ENCODE measurements at regions of chr1 and their contacts with region 1.

Region 1: DNA sequence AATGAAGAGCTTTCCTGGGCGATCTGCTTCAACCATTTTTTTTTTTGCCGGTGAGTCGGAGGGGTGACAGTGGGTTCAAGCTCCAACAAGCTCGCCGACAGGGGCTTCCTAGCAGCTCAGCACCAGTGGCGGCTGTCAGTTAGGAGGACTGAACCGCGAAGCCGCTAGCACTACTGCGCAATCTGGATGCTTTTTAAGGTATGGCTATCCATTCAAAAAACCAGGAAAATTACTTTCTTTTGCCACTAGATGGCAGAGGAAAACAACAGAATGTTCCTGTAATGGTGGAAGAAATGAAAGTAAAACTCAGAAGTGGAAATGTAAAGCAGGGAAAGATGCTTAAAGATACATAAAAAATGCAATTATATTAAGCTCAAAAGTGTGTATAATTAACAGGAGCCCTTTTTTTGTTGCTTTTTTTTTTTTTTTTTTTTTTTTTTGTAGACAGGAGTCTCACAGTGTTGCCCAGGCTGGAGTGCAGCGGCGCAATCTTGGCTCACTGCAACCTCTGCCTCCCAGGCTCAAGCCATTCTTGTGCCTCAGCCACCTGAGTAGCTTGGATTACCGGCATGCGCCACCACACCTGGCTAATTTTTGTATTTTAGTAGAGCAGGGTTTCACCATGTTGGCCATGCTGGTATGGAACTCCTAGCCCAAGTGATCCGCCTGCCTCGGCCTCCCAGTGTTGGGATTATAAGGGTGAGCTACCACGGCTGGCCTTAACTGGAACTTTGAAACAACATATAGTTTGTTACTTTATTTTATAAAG is 8.5 kb downstream of the KYAT3 start:
- DNase-seq: no peak
- H3K4me3 ChIP-seq: no peak overlapping the region
- CTCF ChIP-seq: peak; percentile 36

Region 2: GRCh38 chr1:88897070-88897730 is 86.8 kb before region 1 on chr1:
- CTCF ChIA-PET with region 1: no interaction called
- POLR2A ChIA-PET with region 1: no interaction called
- DNase-seq: no peak
- H3K4me3 ChIP-seq: no peak overlapping the region
- CTCF ChIP-seq: no peak

Region 3: DNA sequence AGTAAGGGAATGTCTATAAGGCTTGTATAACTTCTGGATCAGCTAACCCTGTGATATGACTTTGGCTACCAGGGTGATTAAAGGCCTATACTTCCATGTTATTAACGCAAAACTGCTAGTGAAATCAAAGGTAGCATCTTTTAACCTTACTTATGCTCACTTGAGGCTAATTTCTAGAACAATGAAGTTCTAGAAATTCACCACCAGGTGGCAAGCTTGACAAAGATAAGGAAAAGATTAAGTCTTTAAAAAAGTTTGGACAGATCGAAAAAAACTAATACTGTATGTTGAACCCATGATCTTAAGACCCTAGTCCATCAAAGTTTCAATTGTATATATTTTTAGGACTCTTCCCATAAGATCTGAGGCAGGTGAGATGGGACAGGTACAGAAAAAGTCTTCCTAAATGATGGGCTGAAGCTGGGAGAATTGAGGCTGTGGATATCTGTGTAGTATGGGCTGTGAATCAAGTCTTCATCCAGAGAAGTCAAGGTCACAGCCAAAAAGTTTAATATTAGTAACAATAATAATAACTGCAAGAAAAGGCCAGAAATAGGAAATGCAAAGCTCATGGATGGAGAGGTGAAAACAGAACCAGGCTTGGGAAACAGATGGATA is 10.3 kb before region 1 on chr1:
- CTCF ChIA-PET with region 1: interaction called, 96 read pairs
- POLR2A ChIA-PET with region 1: no interaction called
- DNase-seq: no peak
- H3K4me3 ChIP-seq: no peak overlapping the region
- CTCF ChIP-seq: no peak

Region 4: DNA sequence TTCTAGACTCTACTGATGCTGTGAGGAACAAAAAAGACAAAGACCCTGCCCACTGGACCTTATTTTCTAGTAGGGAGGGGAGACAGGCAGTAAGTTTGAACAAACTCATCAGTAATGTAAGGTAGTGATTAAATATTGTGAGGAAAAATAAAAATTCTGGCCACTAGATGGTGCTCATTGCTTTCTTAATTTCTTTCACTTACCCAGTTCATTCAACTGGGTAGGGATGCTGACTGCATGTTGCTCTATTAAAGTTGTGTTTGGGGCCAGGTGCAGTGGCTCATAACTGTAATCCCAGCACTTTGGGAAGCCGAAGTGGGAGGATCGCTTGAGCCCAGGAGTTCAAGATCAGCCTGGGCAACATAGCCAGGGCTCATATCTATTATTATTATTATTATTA is 14.7 kb after region 1 on chr1:
- CTCF ChIA-PET with region 1: interaction called, 15 read pairs
- POLR2A ChIA-PET with region 1: no interaction called
- DNase-seq: no peak
- H3K4me3 ChIP-seq: no peak overlapping the region
- CTCF ChIP-seq: peak; percentile 12

Region 5: DNA sequence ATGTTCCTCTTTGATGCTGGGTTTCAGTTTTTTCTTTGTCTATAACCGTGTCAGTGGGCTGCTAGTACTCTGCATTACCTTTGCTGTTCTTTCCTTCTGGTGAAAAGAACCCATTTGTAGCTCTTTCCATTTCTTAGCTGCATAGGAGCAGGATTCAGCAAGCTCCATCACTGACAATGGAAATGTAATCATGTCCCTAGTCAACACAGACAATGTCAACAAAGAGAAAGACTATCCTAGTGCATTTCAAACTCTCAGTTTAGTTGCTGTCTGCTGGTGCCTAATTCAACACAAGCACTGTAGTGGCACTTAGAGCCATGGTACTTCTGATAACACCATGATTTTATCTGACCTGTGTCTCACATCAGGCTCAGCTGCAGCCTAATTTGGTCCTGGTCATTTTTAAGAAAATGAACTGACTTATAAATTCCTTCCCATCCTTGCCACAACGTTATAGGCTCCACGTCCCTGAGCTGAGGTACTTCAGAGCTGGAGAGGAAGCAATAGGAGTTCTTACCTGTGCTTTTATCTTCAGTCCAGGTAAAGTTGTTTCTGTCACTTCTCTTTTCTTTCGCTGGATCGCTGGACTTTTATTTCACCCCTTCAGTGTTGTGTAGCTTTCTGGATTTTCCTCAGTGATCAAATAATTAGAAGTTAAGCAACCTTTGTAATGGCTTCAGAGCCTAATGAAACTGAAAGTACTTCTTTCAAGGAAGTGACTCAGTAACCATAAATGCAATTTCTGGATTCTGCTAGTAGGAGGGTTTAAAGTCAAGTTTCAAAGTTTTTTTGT is 38.4 kb after region 1 on chr1 and contains the start of gene GBP3:
- CTCF ChIA-PET with region 1: interaction called, 17 read pairs
- POLR2A ChIA-PET with region 1: no interaction called
- DNase-seq: peak; percentile 42
- H3K4me3 ChIP-seq: peak within 1 kb of the TSS; percentile 73
- CTCF ChIP-seq: no peak

Region 6: GRCh38 chr1:89104147-89104546 is 120.2 kb after region 1 on chr1:
- CTCF ChIA-PET with region 1: no interaction called
- POLR2A ChIA-PET with region 1: no interaction called
- DNase-seq: no peak
- H3K4me3 ChIP-seq: no peak overlapping the region
- CTCF ChIP-seq: no peak

Region 7: GRCh38 chr1:89358287-89358893 is 374.4 kb after region 1 on chr1:
- CTCF ChIA-PET with region 1: interaction called, 30 read pairs
- POLR2A ChIA-PET with region 1: no interaction called
- DNase-seq: no peak
- H3K4me3 ChIP-seq: no peak overlapping the region
- CTCF ChIP-seq: peak; percentile 75

Measured in AG04449 (cell line).